Panc1 (cell line): ENCODE measurements at regions of chr4 and their contacts with region 1.

Region 1: DNA sequence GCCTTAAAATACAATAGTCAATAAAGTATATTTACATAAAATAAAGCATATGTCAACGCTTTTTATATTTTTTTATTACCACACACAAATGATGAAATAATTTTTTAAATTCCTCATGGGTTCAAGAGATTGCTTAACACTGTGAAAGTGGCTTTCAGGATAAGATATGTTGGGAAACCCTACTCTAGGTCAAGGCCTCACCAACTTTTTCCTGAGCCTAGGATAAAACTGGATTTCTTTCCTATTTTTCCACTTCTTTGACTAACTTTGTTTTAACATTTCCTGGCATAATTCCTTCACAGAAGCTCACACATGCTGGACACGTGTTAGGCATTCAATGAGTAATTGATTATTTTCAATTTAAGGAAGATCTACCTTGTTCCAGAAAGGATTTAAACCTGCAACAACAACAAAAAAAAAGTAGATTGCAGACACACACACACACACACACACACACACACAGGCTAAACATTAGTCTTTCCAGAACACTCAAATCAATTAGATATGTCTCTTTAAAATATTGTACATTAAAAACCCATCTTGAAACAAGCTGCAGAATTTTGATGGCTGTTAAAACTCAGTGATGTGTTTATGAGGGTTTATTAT is 9.1 kb downstream of the KLB start:
- DNase-seq: no peak
- ATAC-seq: no peak
- H3K4me3 ChIP-seq: no peak overlapping the region
- H3K27ac ChIP-seq: no peak overlapping the region
- H3K4me1 ChIP-seq: no peaks in the 10 kb centered on the region
- H3K27me3 ChIP-seq: no peaks in the 10 kb centered on the region
- CTCF ChIP-seq: no peak

Region 2: GRCh38 chr4:39274503-39274902 is 141.3 kb before region 1 on chr4:
- CTCF ChIA-PET with region 1: no interaction called
- POLR2A ChIA-PET with region 1: no interaction called
- in situ Hi-C with region 1: no loop called
- intact Hi-C with region 1: no loop called
- DNase-seq: no peak
- ATAC-seq: no peak
- H3K4me3 ChIP-seq: no peak overlapping the region
- H3K27ac ChIP-seq: no peak overlapping the region
- H3K4me1 ChIP-seq: no peaks in the 10 kb centered on the region
- H3K27me3 ChIP-seq: no peaks in the 10 kb centered on the region
- CTCF ChIP-seq: no peak

Region 3: DNA sequence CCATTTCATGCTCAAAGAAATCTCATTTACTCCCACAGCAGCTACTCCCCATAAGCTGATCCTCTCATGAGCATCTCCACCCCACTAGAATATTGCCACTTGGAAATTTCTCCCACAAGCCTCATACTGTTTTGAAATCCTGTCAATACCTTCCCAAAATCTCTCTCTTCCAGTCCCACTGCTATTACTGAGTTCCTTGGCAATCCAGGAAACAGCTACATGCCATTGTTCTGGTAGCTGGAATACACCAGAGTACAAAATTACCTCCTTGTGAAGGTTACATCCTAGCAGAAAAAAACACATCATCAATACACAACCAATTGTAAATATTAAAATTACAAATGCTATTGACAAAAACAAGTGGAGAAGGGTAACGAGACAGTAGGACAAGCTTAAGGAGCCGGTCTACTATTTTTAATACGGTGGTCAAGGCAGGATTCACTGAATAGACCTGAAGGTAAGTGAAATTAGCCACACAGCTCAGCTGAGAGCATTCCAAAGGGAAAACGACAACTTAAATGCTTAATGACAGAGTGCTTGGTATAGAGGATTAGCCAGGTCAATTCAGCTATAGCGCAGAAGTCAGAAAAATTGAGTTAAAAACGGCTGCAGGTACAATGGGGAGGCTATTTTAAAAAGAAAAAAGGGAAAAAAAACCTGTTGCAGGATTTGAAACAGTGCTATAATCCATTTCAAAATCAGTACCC is 36.5 kb after region 1 on chr4:
- CTCF ChIA-PET with region 1: interaction called, 16 read pairs
- POLR2A ChIA-PET with region 1: no interaction called
- in situ Hi-C with region 1: no loop called
- intact Hi-C with region 1: no loop called
- DNase-seq: no peak
- ATAC-seq: no peak
- H3K4me3 ChIP-seq: no peak overlapping the region
- H3K27ac ChIP-seq: no peak overlapping the region
- H3K4me1 ChIP-seq: peaks cover 9% of the 10 kb centered on the region
- H3K27me3 ChIP-seq: no peaks in the 10 kb centered on the region
- CTCF ChIP-seq: no peak

Region 4: DNA sequence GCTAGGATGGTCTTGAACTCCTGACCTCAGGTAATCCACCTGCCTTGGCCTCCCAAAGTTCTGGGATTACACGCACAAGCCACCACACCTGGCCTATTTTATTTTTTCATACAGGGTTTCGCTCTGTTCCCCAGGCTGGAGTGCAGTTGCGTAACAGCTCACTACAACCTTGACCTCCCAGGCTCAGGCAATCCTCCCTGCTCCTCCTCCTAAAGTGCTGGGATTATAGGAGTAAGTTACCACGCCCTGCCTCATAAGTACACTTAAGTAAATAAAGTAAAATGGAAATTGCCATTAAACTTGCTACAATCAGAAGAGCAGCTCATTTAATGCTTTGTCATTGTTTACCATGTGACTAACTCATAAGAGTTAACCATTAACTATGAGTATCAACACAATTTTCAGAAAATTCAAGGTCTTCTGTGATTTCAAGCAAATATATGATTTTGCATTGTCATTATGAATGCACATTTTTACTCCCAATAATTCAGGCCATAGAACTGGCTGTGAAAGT is 99.2 kb after region 1 on chr4:
- CTCF ChIA-PET with region 1: no interaction called
- POLR2A ChIA-PET with region 1: no interaction called
- in situ Hi-C with region 1: no loop called
- intact Hi-C with region 1: no loop called
- DNase-seq: peak; percentile 59
- ATAC-seq: peak; percentile 62; the same call in 1 of the 2 replicates
- H3K4me3 ChIP-seq: no peak overlapping the region
- H3K27ac ChIP-seq: 0 out of 2 replicates have a peak overlapping the region, but pooled peaks have one; percentile 51
- H3K4me1 ChIP-seq: peaks cover 3% of the 10 kb centered on the region; the same call in 1 of the 2 replicates
- H3K27me3 ChIP-seq: no peaks in the 10 kb centered on the region
- CTCF ChIP-seq: no peak